K562 (cell line): ENCODE measurements at regions of chr9 and their contacts with region 1.

Region 1: GRCh38 chr9:125261501-125262293 is at the start of gene GAPVD1:
- DNase-seq: peak; percentile 97 to 99 (median 98)
- ATAC-seq: peak; percentile 96
- H3K4me3 ChIP-seq: peak within 1 kb of the TSS; percentile 97
- H3K27ac ChIP-seq: peak within 1 kb of the TSS; percentile 99
- H3K4me1 ChIP-seq: peaks cover 18 to 22% of the 10 kb centered on the region in 2 experiments; a peak in 4 of 5 replicates
- H3K27me3 ChIP-seq: no peaks in the 10 kb centered on the region
- CTCF ChIP-seq: peak; percentile 62 to 73 (median 62); a peak in 5 of 6 replicates
- EP300 ChIP-seq: 0 out of 2 replicates have a peak, but pooled peaks have one; percentile 16
- POLR2A ChIP-seq: peak; percentile 90
- RAD21 ChIP-seq: no peak
- polyA plus RNA-seq, gene GAPVD1: 9.5 to 12.0 TPM

Region 2: DNA sequence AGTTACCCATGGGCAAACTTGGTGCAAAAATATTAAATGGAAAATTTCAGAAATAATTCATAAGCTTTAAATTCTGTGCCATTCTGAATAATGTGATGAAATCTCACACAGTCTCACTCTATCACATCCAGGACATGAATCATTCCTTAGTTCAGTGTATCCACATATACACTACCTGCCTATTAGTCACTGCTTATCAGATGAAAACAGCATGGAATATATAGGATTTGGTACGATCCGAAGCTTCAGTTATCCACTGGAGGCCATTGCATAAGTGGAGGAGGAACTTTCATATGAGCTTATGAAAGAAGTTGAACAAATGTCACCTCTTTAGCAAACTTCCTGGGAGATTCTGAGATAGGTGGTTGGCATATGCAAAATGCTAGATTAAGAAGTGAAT is 64.1 kb after region 1 on chr9:
- CTCF ChIA-PET with region 1: no interaction called
- POLR2A ChIA-PET with region 1: no interaction called
- in situ Hi-C with region 1: no loop called
- intact Hi-C with region 1: no loop called
- DNase-seq: peak in 1 of 4 experiments; percentile 21
- ATAC-seq: no peak
- H3K4me3 ChIP-seq: no peak overlapping the region
- H3K27ac ChIP-seq: no peak overlapping the region
- H3K4me1 ChIP-seq: no peaks in the 10 kb centered on the region
- H3K27me3 ChIP-seq: no peaks in the 10 kb centered on the region
- CTCF ChIP-seq: no peak
- EP300 ChIP-seq: no peak
- POLR2A ChIP-seq: no peak
- RAD21 ChIP-seq: no peak

Region 3: DNA sequence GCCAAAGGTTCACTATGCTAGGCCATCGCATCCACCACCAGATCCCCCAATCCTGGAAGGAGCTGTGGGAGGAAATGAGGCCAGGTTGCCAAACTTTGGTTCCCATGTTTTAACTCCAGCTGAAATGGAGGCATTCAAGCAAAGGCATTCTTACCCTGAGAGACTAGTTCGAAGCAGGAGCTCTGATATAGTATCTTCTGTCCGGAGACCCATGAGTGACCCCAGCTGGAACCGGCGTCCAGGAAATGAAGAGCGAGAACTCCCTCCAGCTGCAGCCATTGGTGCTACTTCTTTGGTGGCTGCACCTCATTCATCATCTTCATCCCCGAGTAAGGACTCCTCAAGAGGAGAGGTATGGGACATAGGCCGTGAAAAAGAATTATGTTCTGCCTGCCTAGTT is 75.5 kb after region 1 on chr9:
- CTCF ChIA-PET with region 1: no interaction called
- POLR2A ChIA-PET with region 1: no interaction called
- in situ Hi-C with region 1: no loop called
- intact Hi-C with region 1: loop called (anchors 5 kb)
- DNase-seq: peak in 2 of 4 experiments; percentile 30 to 31
- ATAC-seq: peak; percentile 80
- H3K4me3 ChIP-seq: no peak overlapping the region
- H3K27ac ChIP-seq: no peak overlapping the region
- H3K4me1 ChIP-seq: no peaks in the 10 kb centered on the region
- H3K27me3 ChIP-seq: no peaks in the 10 kb centered on the region
- CTCF ChIP-seq: peak; percentile 29 to 55 (median 51); a peak in 5 of 6 replicates
- EP300 ChIP-seq: no peak
- POLR2A ChIP-seq: no peak
- RAD21 ChIP-seq: peak; percentile 38 to 57; a peak in 3 of 4 replicates